ENCODE measurements at regions of chr1 and their contacts with region 1.

Region 1: GRCh38 chr1:111197598-111198284 is 2.7 kb downstream of the DENND2D start:
- DNase-seq: peak; percentile 70
- ATAC-seq: peak; percentile 54
- H3K4me3 ChIP-seq: peak overlapping the region in 1 of 5 experiments; percentile 6
- H3K4me3 Mint-ChIP-seq: peak overlapping the region; percentile 66
- H3K27ac ChIP-seq: no peak overlapping the region
- H3K27ac Mint-ChIP-seq: peak overlapping the region; percentile 84
- H3K4me1 ChIP-seq: peaks cover 57 to 99% of the 10 kb centered on the region in 2 donors
- H3K4me1 Mint-ChIP-seq: peaks cover 95% of the 10 kb centered on the region
- H3K27me3 ChIP-seq: no peaks in the 10 kb centered on the region
- H3K27me3 Mint-ChIP-seq: no peaks in the 10 kb centered on the region
- CTCF ChIP-seq: peak; percentile 28

Region 2: GRCh38 chr1:111234866-111235265 is 37.1 kb after region 1 on chr1:
- CTCF ChIA-PET with region 1: interaction called, 5 read pairs
- POLR2A ChIA-PET with region 1: no interaction called
- intact Hi-C with region 1: loop called (anchors 5 kb)
- DNase-seq: no peak
- ATAC-seq: no peak
- H3K4me3 ChIP-seq: no peak overlapping the region
- H3K4me3 Mint-ChIP-seq: no peak overlapping the region
- H3K27ac ChIP-seq: no peak overlapping the region
- H3K27ac Mint-ChIP-seq: no peak overlapping the region
- H3K4me1 ChIP-seq: peaks cover 27 to 34% of the 10 kb centered on the region in 2 donors
- H3K4me1 Mint-ChIP-seq: peaks cover 52% of the 10 kb centered on the region
- H3K27me3 ChIP-seq: no peaks in the 10 kb centered on the region
- H3K27me3 Mint-ChIP-seq: no peaks in the 10 kb centered on the region
- CTCF ChIP-seq: no peak

Region 3: DNA sequence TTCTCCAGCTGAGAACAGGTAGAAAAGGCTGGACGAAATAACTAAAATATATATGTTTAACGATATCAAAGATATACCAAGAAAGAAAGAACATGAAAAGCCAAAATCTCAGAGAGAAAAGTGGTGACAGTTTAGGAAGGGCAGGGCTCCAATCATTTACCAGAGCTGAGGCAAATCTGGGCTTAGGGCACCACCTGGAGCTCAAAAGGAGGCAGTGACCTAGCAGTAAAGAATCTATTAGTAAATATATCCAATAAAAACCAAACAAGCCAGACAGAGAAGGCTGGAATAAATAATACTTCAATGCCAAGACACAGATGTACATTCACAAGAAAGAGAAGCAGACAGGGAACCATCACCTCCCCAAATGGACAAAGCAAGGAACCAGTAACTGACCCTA is 136.4 kb after region 1 on chr1:
- CTCF ChIA-PET with region 1: interaction called, 19 read pairs
- POLR2A ChIA-PET with region 1: no interaction called
- intact Hi-C with region 1: no loop called
- DNase-seq: peak; percentile 72
- ATAC-seq: peak; percentile 62
- H3K4me3 ChIP-seq: no peak overlapping the region
- H3K4me3 Mint-ChIP-seq: no peak overlapping the region
- H3K27ac ChIP-seq: no peak overlapping the region
- H3K27ac Mint-ChIP-seq: no peak overlapping the region
- H3K4me1 ChIP-seq: peaks cover 0 to 6% of the 10 kb centered on the region in 2 donors
- H3K4me1 Mint-ChIP-seq: no peaks in the 10 kb centered on the region
- H3K27me3 ChIP-seq: no peaks in the 10 kb centered on the region
- H3K27me3 Mint-ChIP-seq: no peaks in the 10 kb centered on the region
- CTCF ChIP-seq: peak; percentile 74

Region 4: DNA sequence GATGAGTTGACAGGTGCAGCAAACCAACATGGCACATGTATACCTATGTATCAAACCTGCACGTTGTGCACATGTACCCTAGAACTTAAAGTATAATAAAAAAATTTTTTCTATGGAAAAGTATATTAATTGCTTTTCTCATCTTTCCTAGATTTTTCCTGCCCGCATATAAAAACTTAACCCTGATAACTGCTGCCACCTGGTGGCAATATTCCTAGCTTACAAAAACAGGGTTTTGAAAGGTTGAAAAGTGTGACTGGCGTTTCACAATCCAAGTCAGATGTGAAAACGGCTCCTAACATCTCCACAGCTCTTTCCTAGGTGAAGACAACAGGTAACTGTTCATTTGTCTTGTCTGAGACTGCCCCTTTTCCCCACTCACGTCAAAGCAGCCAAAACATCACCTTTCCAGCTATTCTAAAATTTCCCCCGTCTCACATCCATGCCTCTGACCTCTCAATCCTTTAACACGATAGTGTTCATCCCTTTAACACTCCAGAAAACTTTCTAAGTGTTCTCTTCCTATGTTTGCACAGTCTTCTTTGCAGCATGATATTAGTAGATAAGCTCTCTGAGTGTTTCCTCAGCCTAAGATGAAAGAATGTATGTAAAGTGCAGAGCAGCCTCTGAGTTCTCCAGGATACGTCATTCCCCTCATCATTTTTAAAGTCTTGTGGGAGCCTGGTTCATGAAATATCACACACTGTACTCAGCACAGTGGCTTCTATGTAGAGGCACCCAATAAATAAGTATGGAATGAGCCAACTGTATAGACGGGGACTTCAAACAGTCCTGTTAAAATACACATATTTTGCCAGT is 202.3 kb after region 1 on chr1:
- CTCF ChIA-PET with region 1: interaction called, 13 read pairs
- POLR2A ChIA-PET with region 1: no interaction called
- intact Hi-C with region 1: loop called (anchors 1 kb)
- DNase-seq: peak; percentile 61
- ATAC-seq: no peak
- H3K4me3 ChIP-seq: no peak overlapping the region
- H3K4me3 Mint-ChIP-seq: no peak overlapping the region
- H3K27ac ChIP-seq: no peak overlapping the region
- H3K27ac Mint-ChIP-seq: peak overlapping the region; percentile 8
- H3K4me1 ChIP-seq: peaks cover 12 to 15% of the 10 kb centered on the region in 2 donors
- H3K4me1 Mint-ChIP-seq: peaks cover 24% of the 10 kb centered on the region
- H3K27me3 ChIP-seq: no peaks in the 10 kb centered on the region
- H3K27me3 Mint-ChIP-seq: no peaks in the 10 kb centered on the region
- CTCF ChIP-seq: peak; percentile 70

Measured in B cell (primary cell).